A673 (cell line): ENCODE measurements at regions of chr1 and their contacts with region 1.

Region 1: DNA sequence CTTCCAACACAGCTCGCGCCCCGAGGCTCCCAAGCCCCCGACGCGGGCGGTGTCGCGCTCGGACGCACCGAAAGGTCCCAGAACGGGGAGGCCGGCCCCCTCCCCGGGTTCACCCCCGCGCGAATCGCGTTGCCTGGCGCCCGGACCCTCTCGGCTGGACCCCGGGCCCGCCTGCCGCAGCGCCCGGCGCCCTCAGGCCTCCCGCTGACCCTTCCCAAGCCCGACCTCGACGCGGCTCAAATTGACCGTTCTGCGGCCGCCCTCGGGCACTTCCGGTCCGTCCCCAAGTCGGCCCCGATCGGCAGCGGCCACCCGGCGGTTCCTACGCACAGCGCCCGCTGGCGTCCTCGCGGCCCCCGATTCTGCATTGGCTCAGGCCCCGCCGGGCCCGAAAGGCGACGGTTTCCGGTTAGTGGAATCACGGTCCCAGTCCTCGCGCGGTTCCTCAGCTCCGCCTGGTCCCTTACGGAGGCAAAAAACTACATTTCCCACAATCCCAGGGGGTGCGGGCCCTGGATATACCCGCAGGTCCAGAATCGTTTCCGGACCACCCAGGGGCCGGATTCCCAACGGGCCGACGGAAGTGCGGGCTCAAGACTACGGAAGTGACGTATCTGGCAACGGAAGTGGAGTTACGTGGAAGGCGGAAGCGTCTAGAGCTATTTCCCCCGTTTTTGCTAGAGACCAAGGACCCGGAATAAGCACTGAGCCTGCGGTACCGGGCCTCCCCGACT is at the start of gene AURKAIP1:
- DNase-seq: peak; percentile 100
- H3K4me3 ChIP-seq: peak within 1 kb of the TSS; percentile 98
- H3K27ac ChIP-seq: peak within 1 kb of the TSS; percentile 93
- H3K4me1 ChIP-seq: peaks cover 10% of the 10 kb centered on the region
- H3K27me3 ChIP-seq: no peaks in the 10 kb centered on the region
- CTCF ChIP-seq: peak; percentile 45; the same call in 1 of the 2 replicates
- total RNA-seq, gene AURKAIP1: 172 and 176 TPM in 2 replicates

Region 2: GRCh38 chr1:1033009-1033587 is 342.0 kb before region 1 on chr1:
- CTCF ChIA-PET with region 1: no interaction called
- POLR2A ChIA-PET with region 1: no interaction called
- intact Hi-C with region 1: no loop called
- DNase-seq: peak; percentile 96
- H3K4me3 ChIP-seq: peak overlapping the region; percentile 48
- H3K27ac ChIP-seq: peak overlapping the region; percentile 50
- H3K4me1 ChIP-seq: peaks cover 20% of the 10 kb centered on the region
- H3K27me3 ChIP-seq: no peaks in the 10 kb centered on the region
- CTCF ChIP-seq: peak; percentile 83

Region 3: GRCh38 chr1:1043921-1044320 is 331.2 kb before region 1 on chr1:
- CTCF ChIA-PET with region 1: no interaction called
- POLR2A ChIA-PET with region 1: no interaction called
- intact Hi-C with region 1: no loop called
- DNase-seq: no peak
- H3K4me3 ChIP-seq: no peak overlapping the region
- H3K27ac ChIP-seq: no peak overlapping the region
- H3K4me1 ChIP-seq: peaks cover 16% of the 10 kb centered on the region
- H3K27me3 ChIP-seq: no peaks in the 10 kb centered on the region
- CTCF ChIP-seq: no peak

Region 4: DNA sequence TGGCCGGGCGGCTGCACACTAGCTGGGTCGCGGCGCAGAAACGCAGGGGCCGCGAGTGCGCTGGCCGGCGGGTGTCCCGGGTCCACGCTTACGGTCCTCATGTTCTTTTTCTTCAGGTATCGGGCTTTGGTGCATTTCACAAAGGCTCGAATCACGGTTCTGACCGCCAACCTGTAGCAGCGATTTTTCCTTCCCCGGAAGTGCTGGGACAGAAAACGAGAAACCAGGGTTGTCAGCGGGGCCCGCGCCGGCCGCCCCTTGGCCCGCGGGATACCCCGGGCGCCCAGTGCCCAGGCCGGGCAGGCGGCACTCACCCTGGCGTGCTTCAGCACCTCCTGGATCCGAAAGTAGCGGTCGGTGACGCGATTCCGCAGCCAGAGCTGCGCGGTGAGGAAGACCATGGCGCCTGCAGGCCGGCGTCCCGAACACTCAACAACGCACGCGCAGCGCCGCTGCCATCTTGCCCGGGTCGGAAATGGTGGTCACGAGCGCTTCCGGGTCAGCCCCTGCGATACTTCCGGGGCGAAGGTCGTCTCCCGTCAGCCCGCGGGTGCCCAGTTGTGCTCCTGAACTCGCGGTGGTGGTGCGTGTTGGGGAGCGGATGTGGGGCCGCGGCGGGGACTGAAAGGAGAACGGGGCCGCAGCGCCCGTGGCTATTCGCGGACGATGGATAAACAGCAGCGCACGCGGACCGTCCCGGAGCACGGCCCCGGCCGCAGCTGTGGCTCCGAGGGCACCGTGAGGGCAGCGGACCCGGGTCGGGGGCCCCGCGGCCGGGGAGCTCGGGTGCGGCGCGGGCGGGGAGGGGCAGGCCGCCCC is 31.9 kb after region 1 on chr1 and contains the start of gene MRPL20:
- CTCF ChIA-PET with region 1: interaction called, 4 read pairs
- POLR2A ChIA-PET with region 1: interaction called, 3 read pairs
- intact Hi-C with region 1: loop called (anchors 1 kb)
- DNase-seq: peak; percentile 96
- H3K4me3 ChIP-seq: peak within 1 kb of the TSS; percentile 98
- H3K27ac ChIP-seq: peak within 1 kb of the TSS; percentile 94
- H3K4me1 ChIP-seq: peaks cover 19% of the 10 kb centered on the region
- H3K27me3 ChIP-seq: no peaks in the 10 kb centered on the region
- CTCF ChIP-seq: no peak
- total RNA-seq, gene MRPL20: 137 and 151 TPM in 2 replicates